Activated B cell treated with CpG ODN at 0.5 μM for 24 hours (primary cell): ENCODE measurements at regions of chr13 and their contacts with region 1.

Region 1: GRCh38 chr13:21625366-21625765 is 21.4 kb upstream of the MICU2 start:
- DNase-seq: no peak
- ATAC-seq: no peak
- H3K4me3 Mint-ChIP-seq: no peak overlapping the region
- H3K27ac Mint-ChIP-seq: no peak overlapping the region
- H3K4me1 Mint-ChIP-seq: no peaks in the 10 kb centered on the region
- H3K27me3 Mint-ChIP-seq: peaks cover 11% of the 10 kb centered on the region
- CTCF ChIP-seq: no peak

Region 2: DNA sequence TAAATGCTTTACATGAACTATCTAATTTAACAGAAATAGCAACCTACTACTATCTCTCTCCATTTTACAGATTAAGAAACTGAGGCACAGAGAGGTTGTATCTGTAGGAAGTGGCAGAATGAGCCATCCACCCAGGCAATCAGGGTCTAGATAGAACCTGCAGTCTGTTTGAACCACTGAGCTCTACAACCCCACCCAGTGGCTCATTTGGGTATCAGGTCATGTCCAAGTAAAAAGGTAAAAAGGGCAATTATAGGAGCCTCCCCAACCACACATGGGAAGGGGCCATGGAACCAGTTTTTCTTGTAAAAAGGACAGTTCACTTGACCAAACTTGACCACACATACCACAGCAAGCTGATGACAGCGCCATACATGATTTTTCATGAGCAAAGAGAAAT is 1462.5 kb after region 1 on chr13:
- CTCF ChIA-PET with region 1: no interaction called
- POLR2A ChIA-PET with region 1: no interaction called
- intact Hi-C with region 1: loop called (anchors 2 kb)
- DNase-seq: no peak
- ATAC-seq: no peak
- H3K4me3 Mint-ChIP-seq: no peak overlapping the region
- H3K27ac Mint-ChIP-seq: no peak overlapping the region
- H3K4me1 Mint-ChIP-seq: no peaks in the 10 kb centered on the region
- H3K27me3 Mint-ChIP-seq: no peaks in the 10 kb centered on the region
- CTCF ChIP-seq: no peak